SK-N-SH (cell line): ENCODE measurements at regions of chr19 and their contacts with region 1.

Region 1: GRCh38 chr19:35557539-35558399 is 5.7 kb downstream of the ATP4A start:
- DNase-seq: peak; percentile 96
- H3K4me3 ChIP-seq: peak overlapping the region; percentile 37 to 43; a peak in 3 of 4 replicates
- H3K27ac ChIP-seq: no peak overlapping the region
- H3K4me1 ChIP-seq: peaks cover 0 to 11% of the 10 kb centered on the region in 2 experiments; a peak in 1 of 4 replicates
- H3K27me3 ChIP-seq: peaks cover 43% of the 10 kb centered on the region
- CTCF ChIP-seq: no peak
- EP300 ChIP-seq: no peak
- RAD21 ChIP-seq: no peak; the same call in 1 of the 2 replicates

Region 2: DNA sequence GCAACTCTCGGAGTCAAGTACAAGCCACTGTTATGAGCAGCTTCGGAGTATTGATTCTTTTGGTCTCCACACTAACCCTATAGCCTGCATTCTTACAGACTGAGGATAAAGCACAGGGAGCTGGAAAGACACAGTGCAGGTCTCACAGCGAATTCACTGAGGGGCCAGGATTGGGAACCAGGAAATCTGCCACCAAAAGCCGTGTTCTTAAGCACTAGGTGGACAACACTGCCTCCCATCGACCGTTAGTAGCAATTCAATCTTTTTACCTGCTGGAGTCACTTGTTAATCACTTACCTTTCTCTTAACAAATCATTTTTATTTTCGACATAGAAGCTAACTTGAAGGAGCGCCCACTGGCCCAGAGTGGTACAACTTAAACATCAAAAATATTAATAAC is 34.5 kb after region 1 on chr19:
- CTCF ChIA-PET with region 1: interaction called, 15 read pairs
- POLR2A ChIA-PET with region 1: no interaction called
- DNase-seq: peak; percentile 41
- H3K4me3 ChIP-seq: no peak overlapping the region
- H3K27ac ChIP-seq: no peak overlapping the region
- H3K4me1 ChIP-seq: no peaks in the 10 kb centered on the region
- H3K27me3 ChIP-seq: peaks cover 36% of the 10 kb centered on the region
- CTCF ChIP-seq: peak; percentile 48
- EP300 ChIP-seq: no peak
- RAD21 ChIP-seq: peak; percentile 59